ENCODE measurements at regions of chr5 and their contacts with region 1.

Region 1: GRCh38 chr5:159412284-159413046 is 82.2 kb upstream of the IL12B start:
- DNase-seq: peak; percentile 56 to 92
- ATAC-seq: peak; percentile 92 to 97 (median 93)
- H3K4me3 ChIP-seq: no peak overlapping the region
- H3K4me3 Mint-ChIP-seq: peak overlapping the region; percentile 73
- H3K27ac ChIP-seq: peak overlapping the region; percentile 69
- H3K27ac Mint-ChIP-seq: peak overlapping the region; percentile 75 to 79
- H3K4me1 ChIP-seq: peaks cover 31% of the 10 kb centered on the region
- H3K4me1 Mint-ChIP-seq: peaks cover 52 to 53% of the 10 kb centered on the region in 2 donors
- H3K27me3 ChIP-seq: no peaks in the 10 kb centered on the region
- H3K27me3 Mint-ChIP-seq: no peaks in the 10 kb centered on the region
- CTCF ChIP-seq: no peak

Region 2: DNA sequence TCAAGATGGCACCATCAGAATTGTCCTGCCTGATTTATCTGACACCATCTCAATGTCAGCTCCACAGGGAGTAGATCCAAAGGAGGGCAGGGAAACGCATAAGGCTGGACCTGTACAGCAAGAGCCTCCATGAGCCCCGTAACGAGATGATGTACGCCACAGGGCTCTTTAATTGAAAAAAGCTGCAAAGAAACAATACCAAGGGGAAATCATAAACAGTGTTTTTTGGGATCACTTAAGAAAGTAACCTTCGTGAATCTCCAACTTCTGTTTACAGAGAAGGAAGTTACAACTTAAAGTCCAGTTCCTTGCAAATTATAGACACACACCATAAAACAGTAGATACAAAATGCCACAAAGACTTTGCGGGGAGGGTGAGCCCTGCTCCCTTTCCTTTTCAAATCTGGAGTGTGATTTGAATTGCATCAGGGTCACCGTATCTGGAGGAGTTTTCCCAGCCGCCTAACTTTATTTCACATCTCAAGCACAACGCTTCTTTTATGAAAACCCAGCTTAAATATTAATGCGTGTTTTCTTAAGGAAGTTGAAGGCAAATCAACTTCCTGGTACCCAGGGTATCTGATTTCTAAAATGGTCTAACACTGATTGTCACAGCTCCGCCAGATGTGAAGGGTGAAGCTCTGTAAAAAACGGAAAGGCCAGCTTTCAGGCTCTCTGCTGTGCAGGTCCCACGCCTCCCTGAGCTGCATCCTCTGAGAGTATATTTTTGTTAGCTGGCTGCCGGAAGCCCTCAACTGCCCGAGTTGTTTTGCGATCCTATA is 401.6 kb before region 1 on chr5:
- intact Hi-C with region 1: no loop called
- DNase-seq: no peak
- ATAC-seq: no peak
- H3K4me3 ChIP-seq: peak overlapping the region; percentile 25
- H3K4me3 Mint-ChIP-seq: peak overlapping the region; percentile 17
- H3K27ac ChIP-seq: peak overlapping the region; percentile 66
- H3K27ac Mint-ChIP-seq: no peak overlapping the region
- H3K4me1 ChIP-seq: peaks cover 3% of the 10 kb centered on the region
- H3K4me1 Mint-ChIP-seq: peaks cover 6 to 9% of the 10 kb centered on the region in 2 donors
- H3K27me3 ChIP-seq: no peaks in the 10 kb centered on the region
- H3K27me3 Mint-ChIP-seq: peaks cover 2 to 36% of the 10 kb centered on the region in 2 donors
- CTCF ChIP-seq: no peak

Region 3: DNA sequence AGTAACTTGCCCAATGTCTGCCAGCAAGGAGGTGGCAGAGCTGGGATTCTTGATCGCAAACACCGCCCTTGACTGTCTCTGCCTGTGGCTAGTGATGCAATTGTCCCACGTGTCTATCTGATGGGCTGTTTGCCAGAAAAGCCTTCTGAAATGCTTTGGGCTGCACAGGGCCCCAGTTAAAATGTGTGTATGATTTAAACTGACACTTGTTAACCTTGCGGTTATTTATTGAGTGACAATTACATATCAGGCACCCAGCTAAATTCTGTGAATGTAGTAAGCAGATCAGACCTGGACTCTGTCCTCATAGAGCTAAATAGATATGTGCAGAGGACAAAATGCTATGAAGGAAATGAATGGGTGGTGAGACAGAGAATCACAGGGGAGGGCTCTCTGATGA is 70.6 kb before region 1 on chr5:
- intact Hi-C with region 1: loop called (anchors 2 kb)
- DNase-seq: peak; percentile 56 to 89
- ATAC-seq: peak; percentile 77 to 84 (median 82)
- H3K4me3 ChIP-seq: no peak overlapping the region
- H3K4me3 Mint-ChIP-seq: peak overlapping the region; percentile 29
- H3K27ac ChIP-seq: no peak overlapping the region
- H3K27ac Mint-ChIP-seq: peak overlapping the region; percentile 72 to 81
- H3K4me1 ChIP-seq: peaks cover 38% of the 10 kb centered on the region
- H3K4me1 Mint-ChIP-seq: peaks cover 54 to 58% of the 10 kb centered on the region in 2 donors
- H3K27me3 ChIP-seq: no peaks in the 10 kb centered on the region
- H3K27me3 Mint-ChIP-seq: peaks cover 2 to 11% of the 10 kb centered on the region in 2 donors
- CTCF ChIP-seq: no peak

Region 4: GRCh38 chr5:159386028-159386711 is 26.3 kb before region 1 on chr5:
- intact Hi-C with region 1: no loop called
- DNase-seq: no peak
- ATAC-seq: no peak
- H3K4me3 ChIP-seq: no peak overlapping the region
- H3K4me3 Mint-ChIP-seq: no peak overlapping the region
- H3K27ac ChIP-seq: no peak overlapping the region
- H3K27ac Mint-ChIP-seq: no peak overlapping the region
- H3K4me1 ChIP-seq: no peaks in the 10 kb centered on the region
- H3K4me1 Mint-ChIP-seq: no peaks in the 10 kb centered on the region
- H3K27me3 ChIP-seq: no peaks in the 10 kb centered on the region
- H3K27me3 Mint-ChIP-seq: peaks cover 0 to 2% of the 10 kb centered on the region in 2 donors
- CTCF ChIP-seq: no peak

Region 5: DNA sequence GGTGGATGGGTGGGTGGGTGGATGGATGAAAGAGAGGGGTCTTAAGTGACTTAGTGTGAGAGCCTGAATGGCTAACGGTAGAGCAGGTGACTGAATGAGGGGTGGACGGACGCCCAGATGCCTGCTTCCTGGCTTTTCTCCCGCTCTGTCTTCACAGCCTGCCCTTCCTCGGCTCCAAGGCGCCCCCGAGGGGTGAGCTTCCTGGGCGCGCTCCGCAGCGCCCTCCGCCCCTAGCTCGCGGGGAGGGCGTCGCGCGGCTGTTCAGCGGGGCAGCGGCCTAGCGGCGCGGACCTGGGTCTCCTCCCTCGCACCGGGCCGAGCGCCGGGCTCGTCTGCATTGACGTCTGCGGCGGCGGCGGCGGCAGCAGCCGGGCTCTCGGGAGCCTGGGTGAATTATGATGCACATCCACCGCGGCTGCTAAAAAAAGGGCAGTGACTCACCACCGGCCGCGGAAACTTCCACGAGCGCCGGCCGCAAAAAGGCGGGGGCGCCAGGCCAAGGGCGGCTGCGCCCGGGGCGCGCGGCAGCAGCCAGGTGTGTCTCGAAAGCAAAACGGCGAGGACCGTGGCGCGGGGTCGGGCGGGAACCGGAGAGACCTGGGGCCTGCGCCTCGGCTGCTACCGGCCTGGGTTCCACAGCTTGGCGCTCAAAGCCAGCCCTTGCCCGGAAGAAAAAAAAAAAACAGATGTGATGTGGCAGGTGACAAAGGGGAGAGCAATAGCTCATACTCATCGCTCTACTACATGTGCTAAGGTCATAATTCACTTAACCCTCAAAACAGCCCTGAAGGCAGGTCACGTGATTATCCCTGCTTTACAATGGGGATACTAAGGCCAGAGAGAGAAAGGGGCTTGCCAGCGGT is 360.8 kb after region 1 on chr5:
- intact Hi-C with region 1: loop called (anchors 1 kb)
- DNase-seq: peak; percentile 66 to 79
- ATAC-seq: peak; percentile 83 to 95 (median 94)
- H3K4me3 ChIP-seq: peak overlapping the region; percentile 18
- H3K4me3 Mint-ChIP-seq: peak overlapping the region; percentile 68
- H3K27ac ChIP-seq: peak overlapping the region; percentile 8
- H3K27ac Mint-ChIP-seq: peak overlapping the region; percentile 57 to 60
- H3K4me1 ChIP-seq: peaks cover 10% of the 10 kb centered on the region
- H3K4me1 Mint-ChIP-seq: peaks cover 19 to 22% of the 10 kb centered on the region in 2 donors
- H3K27me3 ChIP-seq: peaks cover 9% of the 10 kb centered on the region
- H3K27me3 Mint-ChIP-seq: peaks cover 16 to 26% of the 10 kb centered on the region in 2 donors
- CTCF ChIP-seq: no peak